GM13977 (cell line): ENCODE measurements at regions of chr13 and their contacts with region 1.

Region 1: DNA sequence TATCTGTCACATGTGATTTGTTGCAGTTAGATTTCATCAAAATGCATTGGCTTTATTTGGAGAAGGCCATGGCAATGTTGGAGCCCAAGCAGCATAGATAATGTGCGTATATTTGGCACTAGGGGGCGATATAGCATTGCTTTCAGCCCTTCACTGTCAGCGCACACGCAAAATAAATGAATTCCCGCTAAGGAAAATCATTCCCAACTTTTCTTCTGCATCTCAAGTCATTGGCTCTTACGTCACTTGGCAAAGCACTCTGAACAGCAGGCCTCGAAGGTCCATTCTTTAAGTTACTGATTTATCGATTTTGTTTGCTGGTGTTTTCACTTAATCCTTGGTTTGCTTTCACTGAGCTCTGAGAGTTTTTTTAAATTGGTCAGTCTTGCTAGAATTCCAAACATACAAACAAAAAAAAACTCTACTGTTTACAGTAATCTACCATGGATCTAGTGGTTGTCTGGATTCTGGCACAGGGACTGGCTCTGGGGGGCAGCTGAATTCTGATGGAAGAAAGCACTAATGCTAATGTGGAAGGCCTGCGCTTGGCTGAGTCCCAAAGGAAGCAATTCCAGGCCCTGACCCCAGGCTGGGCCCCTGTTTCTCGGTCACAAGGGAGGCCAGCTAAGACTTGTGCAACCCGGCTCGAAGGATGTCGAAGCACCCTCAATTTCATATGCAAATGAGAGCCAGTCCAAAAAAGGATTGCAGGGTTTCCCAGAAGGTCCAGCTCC is 97.7 kb upstream of the IPO5 start:
- DNase-seq: peak; percentile 46
- CTCF ChIP-seq: peak; percentile 85

Region 2: DNA sequence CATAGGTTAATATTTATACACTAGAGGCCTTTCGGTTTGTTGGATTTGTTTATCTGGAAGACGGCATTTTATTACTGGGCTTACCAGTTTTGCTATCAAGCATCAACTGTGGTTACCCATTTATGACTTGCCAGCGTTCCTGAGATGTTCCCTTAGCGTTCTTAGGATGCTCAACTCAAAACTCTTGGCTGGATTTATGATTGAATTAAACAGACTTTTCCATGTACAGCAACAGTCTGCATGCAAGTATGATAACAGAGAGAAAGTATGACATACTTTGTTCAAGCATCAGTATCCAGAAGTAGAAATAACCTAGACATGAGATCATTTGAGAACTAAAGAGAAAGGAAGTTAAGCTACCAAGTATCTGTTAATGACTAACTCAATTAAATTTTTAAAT is 351.2 kb after region 1 on chr13:
- in situ Hi-C with region 1: no loop called
- DNase-seq: no peak
- CTCF ChIP-seq: no peak

Region 3: GRCh38 chr13:98842864-98843481 is 987.2 kb after region 1 on chr13:
- in situ Hi-C with region 1: loop called (anchors 25 kb)
- DNase-seq: peak; percentile 52
- CTCF ChIP-seq: peak; percentile 90